HCT116 (cell line): ENCODE measurements at regions of chr13 and their contacts with region 1.

Region 1: GRCh38 chr13:73851104-73851503 is 283.1 kb downstream of the KLF12 start:
- DNase-seq: no peak
- ATAC-seq: no peak
- H3K4me3 ChIP-seq: no peak overlapping the region
- H3K27ac ChIP-seq: no peak overlapping the region
- H3K4me1 ChIP-seq: no peaks in the 10 kb centered on the region
- H3K27me3 ChIP-seq: no peaks in the 10 kb centered on the region
- CTCF ChIP-seq: no peak
- POLR2A ChIP-seq: no peak
- RAD21 ChIP-seq: no peak

Region 2: DNA sequence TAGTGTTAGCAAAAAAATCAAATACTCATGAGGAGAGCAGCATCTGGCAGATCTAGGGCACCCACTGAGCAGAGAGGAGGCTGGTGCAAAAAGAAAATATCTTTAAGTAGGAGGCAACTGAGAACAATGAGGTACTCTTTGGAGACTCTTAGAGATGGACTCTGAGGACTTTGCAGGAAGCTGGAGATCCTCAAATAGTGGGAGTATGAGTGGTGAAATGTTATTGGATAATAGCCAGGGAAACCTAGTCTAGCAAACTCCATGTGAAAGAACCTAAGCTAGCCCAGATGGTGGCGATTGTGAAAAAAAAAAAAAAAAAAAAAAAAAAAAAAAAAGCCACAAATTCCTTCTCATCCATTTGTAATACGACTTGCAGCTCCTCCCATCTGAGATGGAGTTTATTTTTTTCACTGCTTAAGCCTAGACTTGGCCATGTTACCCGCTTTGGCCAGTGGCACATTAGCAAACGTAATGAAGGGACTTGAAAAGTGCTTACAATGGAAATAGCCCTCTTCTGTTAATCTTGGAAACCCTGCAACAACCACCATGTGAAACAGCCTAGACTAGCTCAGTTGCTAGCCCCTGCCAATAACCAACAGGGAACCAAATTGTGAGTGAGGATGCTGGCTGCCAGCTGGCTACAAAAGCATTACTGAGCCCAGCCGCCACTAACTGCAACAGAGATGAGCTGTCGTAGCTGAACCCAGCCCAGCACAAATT is 193.1 kb before region 1 on chr13:
- CTCF ChIA-PET with region 1: no interaction called
- POLR2A ChIA-PET with region 1: no interaction called
- RAD21 ChIA-PET with region 1: no interaction called
- intact Hi-C with region 1: no loop called
- DNase-seq: no peak
- ATAC-seq: no peak
- H3K4me3 ChIP-seq: no peak overlapping the region
- H3K27ac ChIP-seq: no peak overlapping the region
- H3K4me1 ChIP-seq: no peaks in the 10 kb centered on the region
- H3K27me3 ChIP-seq: no peaks in the 10 kb centered on the region
- CTCF ChIP-seq: no peak
- POLR2A ChIP-seq: no peak
- RAD21 ChIP-seq: no peak

Region 3: DNA sequence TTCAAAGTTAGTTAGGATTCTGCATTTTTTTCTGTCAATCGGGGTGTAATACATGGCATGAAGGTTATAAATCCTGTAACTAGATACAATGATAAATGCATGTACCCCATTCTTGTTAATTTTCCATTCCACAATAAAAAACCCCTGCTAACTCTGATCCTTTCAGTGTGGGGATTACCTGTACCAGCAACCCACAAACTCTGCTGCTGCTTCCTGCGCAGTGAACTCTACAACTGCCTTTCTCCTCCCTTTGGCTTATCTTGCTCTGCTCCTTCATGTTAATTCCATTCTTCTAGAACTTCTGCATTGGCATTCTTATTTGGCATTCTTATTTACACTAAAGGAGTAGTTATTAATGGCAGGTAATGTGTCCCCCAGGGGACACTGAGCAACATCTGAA is 10.0 kb after region 1 on chr13:
- CTCF ChIA-PET with region 1: no interaction called
- POLR2A ChIA-PET with region 1: no interaction called
- RAD21 ChIA-PET with region 1: no interaction called
- intact Hi-C with region 1: no loop called
- DNase-seq: no peak
- ATAC-seq: no peak
- H3K4me3 ChIP-seq: no peak overlapping the region
- H3K27ac ChIP-seq: no peak overlapping the region
- H3K4me1 ChIP-seq: no peaks in the 10 kb centered on the region
- H3K27me3 ChIP-seq: no peaks in the 10 kb centered on the region
- CTCF ChIP-seq: no peak
- POLR2A ChIP-seq: no peak
- RAD21 ChIP-seq: no peak

Region 4: GRCh38 chr13:74133657-74134201 is 282.6 kb after region 1 on chr13:
- CTCF ChIA-PET with region 1: no interaction called
- POLR2A ChIA-PET with region 1: no interaction called
- RAD21 ChIA-PET with region 1: no interaction called
- intact Hi-C with region 1: loop called (anchors 10 kb)
- DNase-seq: peak; percentile 29
- ATAC-seq: peak; percentile 45
- H3K4me3 ChIP-seq: peak overlapping the region; percentile 56 to 68
- H3K27ac ChIP-seq: peak overlapping the region; percentile 49
- H3K4me1 ChIP-seq: peaks cover 21 to 33% of the 10 kb centered on the region in 2 experiments
- H3K27me3 ChIP-seq: no peaks in the 10 kb centered on the region
- CTCF ChIP-seq: no peak
- POLR2A ChIP-seq: no peak
- RAD21 ChIP-seq: no peak